Heart right ventricle (tissue), 16 donors: ENCODE measurements at regions of chr16 and their contacts with region 1.

Region 1: GRCh38 chr16:30657866-30658730 is at the start of gene FBRS:
- DNase-seq: peak; percentile 100
- ATAC-seq: peak; percentile 85 to 95 (median 92)
- H3K4me3 ChIP-seq: peak within 1 kb of the TSS; percentile 64 to 91 (median 82)
- H3K27ac ChIP-seq: peak within 1 kb of the TSS; percentile 94 to 99 (median 98)
- H3K4me1 ChIP-seq: peaks cover 15 to 46% (median 44%) of the 10 kb centered on the region in 9 donors
- H3K27me3 ChIP-seq: no peaks in the 10 kb centered on the region
- CTCF ChIP-seq: peak; percentile 48 to 98 (median 91)
- total RNA-seq, gene FBRS: 24.6 to 38.5 (median 27.5) TPM

Region 2: GRCh38 chr16:29815793-29816693 is 842.1 kb before region 1 on chr16 and contains the start of gene PAGR1:
- intact Hi-C with region 1: loop called in 1 of 10 experiments (anchors 10 kb)
- DNase-seq: peak; percentile 98 to 99
- ATAC-seq: peak; percentile 82 to 91 (median 86)
- H3K4me3 ChIP-seq: peak within 1 kb of the TSS; percentile 57 to 80 (median 71)
- H3K27ac ChIP-seq: peak within 1 kb of the TSS; percentile 77 to 96 (median 90)
- H3K4me1 ChIP-seq: peaks cover 8 to 78% (median 65%) of the 10 kb centered on the region in 9 donors
- H3K27me3 ChIP-seq: peaks cover 0 to 16% (median 0%) of the 10 kb centered on the region in 7 donors
- CTCF ChIP-seq: peak; percentile 78 to 97 (median 91)
- total RNA-seq, gene PAGR1: 9.6 to 14.8 (median 12.0) TPM

Region 3: GRCh38 chr16:30526823-30527635 is 131.1 kb before region 1 on chr16:
- intact Hi-C with region 1: loop called in 1 of 10 experiments (anchors 10 kb)
- DNase-seq: peak; percentile 98 to 99
- ATAC-seq: peak; percentile 92 to 97 (median 95)
- H3K4me3 ChIP-seq: peak overlapping the region; percentile 52 to 87 (median 71)
- H3K27ac ChIP-seq: peak overlapping the region; percentile 94 to 100 (median 99)
- H3K4me1 ChIP-seq: peaks cover 8 to 43% (median 38%) of the 10 kb centered on the region in 9 donors
- H3K27me3 ChIP-seq: no peaks in the 10 kb centered on the region
- CTCF ChIP-seq: peak in 6 of 9 donors; percentile 23 to 50 (median 33)

Region 4: GRCh38 chr16:30692381-30693064 is 34.4 kb after region 1 on chr16:
- intact Hi-C with region 1: loop called in 1 of 10 experiments (anchors 2 kb)
- DNase-seq: no peak
- ATAC-seq: no peak
- H3K4me3 ChIP-seq: no peak overlapping the region
- H3K27ac ChIP-seq: no peak overlapping the region
- H3K4me1 ChIP-seq: peaks cover 0 to 19% (median 8%) of the 10 kb centered on the region in 9 donors
- H3K27me3 ChIP-seq: peaks cover 0 to 3% (median 0%) of the 10 kb centered on the region in 7 donors
- CTCF ChIP-seq: no peak

Region 5: DNA sequence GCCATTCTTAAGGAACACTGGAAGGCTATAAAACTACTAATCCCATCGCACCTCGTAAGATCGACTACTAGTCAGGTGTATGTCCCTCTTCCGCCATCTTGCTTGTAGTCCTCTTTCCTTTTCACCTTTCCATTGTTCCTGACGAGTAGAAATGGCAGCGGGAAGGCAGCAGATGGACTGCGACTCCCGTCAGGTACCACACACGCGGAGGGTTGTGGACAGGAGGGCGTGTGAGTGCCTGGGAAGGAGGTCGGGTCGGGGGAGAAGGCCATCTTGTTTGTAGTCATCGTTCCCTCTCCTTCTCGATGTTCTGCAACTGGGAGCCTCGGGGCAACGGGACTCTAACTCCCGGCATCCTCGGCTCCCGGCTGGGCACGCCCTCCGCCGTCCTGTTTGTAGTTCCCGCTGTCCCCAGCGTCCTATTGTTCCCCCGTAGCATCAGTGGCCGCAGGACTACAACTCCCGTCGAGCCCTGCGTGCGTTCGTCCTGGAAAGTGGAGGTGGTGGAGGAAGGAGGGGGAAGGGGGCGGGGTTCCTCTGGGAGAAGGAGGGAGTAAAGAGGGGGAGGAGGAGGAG is 264.9 kb after region 1 on chr16:
- intact Hi-C with region 1: loop called in 1 of 10 experiments (anchors 2 kb)
- DNase-seq: peak; percentile 99 to 100
- ATAC-seq: peak; percentile 80 to 89 (median 86)
- H3K4me3 ChIP-seq: peak overlapping the region; percentile 57 to 89 (median 73)
- H3K27ac ChIP-seq: peak overlapping the region; percentile 86 to 97 (median 94)
- H3K4me1 ChIP-seq: peaks cover 0 to 24% (median 16%) of the 10 kb centered on the region in 9 donors
- H3K27me3 ChIP-seq: no peaks in the 10 kb centered on the region
- CTCF ChIP-seq: no peak